Adrenal gland (tissue), 19 donors: ENCODE measurements at regions of chr6 and their contacts with region 1.

Region 1: DNA sequence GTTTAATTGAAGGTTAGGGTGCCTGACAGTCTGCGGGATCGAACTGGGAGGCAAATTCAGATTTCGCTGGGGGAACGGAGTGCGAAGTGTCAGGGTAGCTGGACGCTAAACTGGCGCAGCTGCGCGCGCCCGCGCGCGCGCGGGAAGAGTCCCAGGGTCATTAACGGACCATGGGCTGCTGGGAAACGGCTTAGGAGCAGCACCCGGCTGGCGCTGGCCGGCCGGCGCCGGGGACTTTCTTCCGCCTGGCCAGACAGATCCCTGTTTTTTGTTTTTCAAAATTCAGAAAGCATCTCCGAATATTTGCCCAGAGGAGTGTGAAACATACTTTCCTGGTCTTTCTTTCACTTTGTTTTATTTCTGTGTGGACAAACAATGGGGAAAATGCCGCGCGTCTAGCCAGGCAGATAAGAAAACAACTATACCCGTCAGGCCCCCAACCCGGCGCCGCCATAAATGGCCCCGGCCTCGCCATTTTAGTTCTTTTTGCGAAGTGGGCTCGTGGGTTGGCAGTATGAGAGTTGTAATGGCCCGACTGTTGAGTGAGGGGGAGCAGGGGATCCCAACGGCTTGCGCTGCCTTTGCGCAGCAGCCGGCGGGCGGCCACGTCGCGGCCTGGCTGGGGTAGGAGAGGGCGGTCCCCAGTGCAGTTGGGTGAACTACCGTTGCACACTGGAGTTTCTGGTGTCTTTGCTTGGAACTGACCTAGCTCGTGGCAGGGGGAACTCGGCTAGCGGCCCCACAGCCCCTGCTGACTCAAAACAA is 7.1 kb downstream of the HSPA1B start:
- DNase-seq: peak; percentile 88 to 92 (median 90)
- H3K4me3 ChIP-seq: peak overlapping the region; percentile 62 to 93 (median 84)
- H3K27ac ChIP-seq: peak overlapping the region; percentile 85 to 97 (median 95)
- H3K4me1 ChIP-seq: peaks cover 25 to 49% of the 10 kb centered on the region in 2 donors
- H3K27me3 ChIP-seq: no peaks in the 10 kb centered on the region
- CTCF ChIP-seq: no peak
- POLR2A ChIP-seq: peak; percentile 19 to 75

Region 2: GRCh38 chr6:31689249-31690110 is 145.1 kb before region 1 on chr6:
- intact Hi-C with region 1: loop called (anchors 5 to 10 kb)
- DNase-seq: no peak
- H3K4me3 ChIP-seq: no peak overlapping the region
- H3K27ac ChIP-seq: no peak overlapping the region
- H3K4me1 ChIP-seq: no peaks in the 10 kb centered on the region
- H3K27me3 ChIP-seq: no peaks in the 10 kb centered on the region
- CTCF ChIP-seq: peak in 1 of 6 experiments; percentile 24
- POLR2A ChIP-seq: no peak

Region 3: DNA sequence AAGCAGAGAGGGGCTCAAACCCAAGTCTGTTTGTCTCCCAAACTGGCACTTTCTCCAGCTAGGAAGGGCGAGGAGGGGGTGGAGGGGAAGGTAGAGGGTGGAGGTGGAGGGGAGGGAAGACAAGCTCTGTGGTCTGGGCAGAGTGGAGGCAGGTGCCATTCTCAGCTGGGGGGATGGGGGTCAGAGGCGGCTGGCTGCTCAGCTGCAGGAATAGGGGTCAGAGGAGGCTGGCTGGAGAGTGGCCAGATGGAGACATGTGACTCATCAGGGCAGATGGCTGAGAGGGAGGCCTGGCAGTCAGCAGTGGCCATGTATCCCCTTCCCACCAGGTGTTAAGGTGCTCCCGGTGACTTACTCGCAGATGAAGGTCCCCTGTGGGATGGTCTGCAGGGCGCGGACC is 47.7 kb after region 1 on chr6:
- intact Hi-C with region 1: no loop called
- DNase-seq: peak; percentile 52 to 82 (median 79)
- H3K4me3 ChIP-seq: no peak overlapping the region
- H3K27ac ChIP-seq: peak overlapping the region in 1 of 5 donors; percentile 16
- H3K4me1 ChIP-seq: peaks cover 5 to 6% of the 10 kb centered on the region in 2 donors
- H3K27me3 ChIP-seq: no peaks in the 10 kb centered on the region
- CTCF ChIP-seq: no peak
- POLR2A ChIP-seq: no peak